ENCODE measurements at regions of chr3 and their contacts with region 1.

Region 1: GRCh38 chr3:154786724-154787398 is 293.3 kb upstream of the MME start:
- DNase-seq: no peak
- ATAC-seq: no peak
- H3K4me3 ChIP-seq: no peak overlapping the region
- H3K27ac ChIP-seq: no peak overlapping the region
- H3K4me1 ChIP-seq: peaks cover 0 to 7% of the 10 kb centered on the region in 2 donors
- H3K27me3 ChIP-seq: no peaks in the 10 kb centered on the region
- CTCF ChIP-seq: no peak
- POLR2A ChIP-seq: no peak

Region 2: GRCh38 chr3:154862265-154862664 is 75.4 kb after region 1 on chr3:
- in situ Hi-C with region 1: no loop called
- intact Hi-C with region 1: loop called (anchors 5 kb)
- DNase-seq: no peak
- ATAC-seq: peak; percentile 57 to 82
- H3K4me3 ChIP-seq: no peak overlapping the region
- H3K27ac ChIP-seq: peak overlapping the region in 1 of 4 donors; percentile 37
- H3K4me1 ChIP-seq: peaks cover 0 to 7% of the 10 kb centered on the region in 2 donors
- H3K27me3 ChIP-seq: no peaks in the 10 kb centered on the region
- CTCF ChIP-seq: no peak
- POLR2A ChIP-seq: no peak

Region 3: GRCh38 chr3:156674046-156674910 is 1887.4 kb after region 1 on chr3 and contains the start of gene TIPARP:
- in situ Hi-C with region 1: no loop called
- intact Hi-C with region 1: no loop called
- DNase-seq: peak; percentile 99
- ATAC-seq: peak; percentile 79 to 89
- H3K4me3 ChIP-seq: peak within 1 kb of the TSS; percentile 77 to 92 (median 91)
- H3K27ac ChIP-seq: peak within 1 kb of the TSS; percentile 95 to 100 (median 98)
- H3K4me1 ChIP-seq: peaks cover 34 to 37% of the 10 kb centered on the region in 2 donors
- H3K27me3 ChIP-seq: no peaks in the 10 kb centered on the region
- CTCF ChIP-seq: peak; percentile 63 to 87 (median 84)
- POLR2A ChIP-seq: peak; percentile 98 to 99
- total RNA-seq, gene TIPARP: 16.0 to 50.2 (median 31.7) TPM